WTC11 (cell line): ENCODE measurements at regions of chr9 and their contacts with region 1.

Region 1: DNA sequence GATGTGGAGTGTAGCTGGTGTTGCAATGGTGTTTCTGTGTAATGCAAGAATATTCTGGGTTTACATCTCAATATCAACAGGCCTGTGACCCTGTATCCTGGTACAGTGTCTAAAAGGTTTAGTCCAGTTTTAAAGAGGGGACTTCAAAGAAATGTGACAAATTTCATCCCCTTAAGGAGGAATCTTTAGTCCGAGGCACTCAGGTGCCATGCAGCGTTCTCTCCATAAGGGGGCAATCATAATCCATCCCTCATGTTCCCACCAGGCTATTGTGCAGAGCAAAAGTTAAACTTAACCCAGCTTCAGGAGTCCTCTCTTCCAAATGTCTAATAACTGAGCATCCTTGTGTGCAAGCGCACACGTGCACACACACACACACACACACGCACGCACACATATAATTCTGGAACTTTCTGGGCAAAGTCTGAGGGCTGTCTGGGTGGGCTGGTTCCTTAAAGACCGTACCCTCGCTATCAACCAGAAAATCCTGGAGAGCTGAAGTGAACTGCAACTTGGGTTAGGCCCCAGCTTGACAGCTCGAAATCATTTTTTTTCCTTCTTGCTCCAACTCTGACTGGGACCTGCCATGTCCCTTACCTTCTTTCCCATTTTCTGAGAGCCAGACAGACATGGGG is 46.0 kb downstream of the CRB2 start:
- DNase-seq: peak; percentile 66
- ATAC-seq: peak; percentile 77
- H3K4me3 Mint-ChIP-seq: no peak overlapping the region
- H3K27ac Mint-ChIP-seq: peak overlapping the region; percentile 30; the same call in 1 of the 2 replicates
- H3K4me1 Mint-ChIP-seq: peaks cover 9% of the 10 kb centered on the region
- H3K27me3 Mint-ChIP-seq: no peaks in the 10 kb centered on the region
- CTCF ChIP-seq: peak; percentile 56

Region 2: DNA sequence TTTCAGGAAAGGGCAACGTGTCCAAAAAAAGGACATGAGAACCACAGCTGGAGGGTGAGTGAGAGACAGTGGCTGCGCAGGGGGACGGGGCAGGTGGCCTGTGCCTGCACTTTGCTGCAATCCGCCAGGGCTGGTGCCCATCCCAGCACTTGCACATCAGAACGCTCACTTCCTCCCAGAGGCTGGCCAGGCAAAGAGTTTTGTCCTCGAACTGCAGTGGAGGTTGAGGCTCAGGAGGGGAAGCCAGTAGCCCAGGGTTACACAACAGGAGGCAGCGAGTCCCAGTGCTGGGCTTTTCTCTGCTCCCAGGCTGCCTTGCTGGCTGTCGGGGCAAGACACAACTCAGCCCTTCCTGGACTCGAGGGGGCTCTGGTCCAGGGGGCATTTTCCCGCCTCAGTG is 12.9 kb before region 1 on chr9:
- CTCF ChIA-PET with region 1: interaction called, 12 read pairs
- POLR2A ChIA-PET with region 1: no interaction called
- DNase-seq: no peak
- ATAC-seq: no peak
- H3K4me3 Mint-ChIP-seq: no peak overlapping the region
- H3K27ac Mint-ChIP-seq: no peak overlapping the region
- H3K4me1 Mint-ChIP-seq: no peaks in the 10 kb centered on the region
- H3K27me3 Mint-ChIP-seq: no peaks in the 10 kb centered on the region; the same call in 1 of the 2 replicates
- CTCF ChIP-seq: no peak

Region 3: DNA sequence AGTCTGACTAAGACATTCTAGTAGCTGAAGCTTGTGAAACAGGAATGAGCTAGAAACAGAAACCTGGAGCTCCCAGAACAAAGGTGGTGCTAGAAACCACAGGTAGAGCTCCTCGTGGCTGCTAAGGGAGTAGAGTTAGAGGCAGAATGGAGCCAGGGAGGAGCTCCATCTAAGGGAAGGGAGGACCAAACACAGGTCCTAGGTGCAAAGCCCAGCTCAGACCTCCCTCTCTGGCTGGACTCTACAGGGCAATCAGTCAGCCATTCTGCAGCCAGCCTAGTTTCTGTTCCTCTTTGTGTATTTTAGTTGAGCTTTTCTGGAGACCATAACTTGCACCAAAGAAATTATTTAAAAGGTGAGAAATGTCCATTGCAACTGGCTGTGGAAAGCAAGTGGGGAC is 24.4 kb after region 1 on chr9:
- CTCF ChIA-PET with region 1: interaction called, 14 read pairs
- POLR2A ChIA-PET with region 1: no interaction called
- DNase-seq: no peak
- ATAC-seq: peak; percentile 14; the same call in 1 of the 2 replicates
- H3K4me3 Mint-ChIP-seq: no peak overlapping the region
- H3K27ac Mint-ChIP-seq: no peak overlapping the region
- H3K4me1 Mint-ChIP-seq: peaks cover 25% of the 10 kb centered on the region
- H3K27me3 Mint-ChIP-seq: no peaks in the 10 kb centered on the region; the same call in 1 of the 2 replicates
- CTCF ChIP-seq: no peak

Region 4: GRCh38 chr9:123447934-123448646 is 46.1 kb after region 1 on chr9:
- CTCF ChIA-PET with region 1: interaction called, 11 read pairs
- POLR2A ChIA-PET with region 1: no interaction called
- DNase-seq: no peak
- ATAC-seq: peak; percentile 71
- H3K4me3 Mint-ChIP-seq: no peak overlapping the region
- H3K27ac Mint-ChIP-seq: no peak overlapping the region
- H3K4me1 Mint-ChIP-seq: peaks cover 11% of the 10 kb centered on the region
- H3K27me3 Mint-ChIP-seq: no peaks in the 10 kb centered on the region
- CTCF ChIP-seq: no peak

Region 5: GRCh38 chr9:123544007-123544827 is 142.2 kb after region 1 on chr9:
- CTCF ChIA-PET with region 1: interaction called, 17 read pairs
- POLR2A ChIA-PET with region 1: no interaction called
- DNase-seq: no peak
- ATAC-seq: peak; percentile 34; the same call in 1 of the 2 replicates
- H3K4me3 Mint-ChIP-seq: no peak overlapping the region
- H3K27ac Mint-ChIP-seq: no peak overlapping the region
- H3K4me1 Mint-ChIP-seq: peaks cover 6% of the 10 kb centered on the region
- H3K27me3 Mint-ChIP-seq: no peaks in the 10 kb centered on the region
- CTCF ChIP-seq: peak; percentile 50

Region 6: DNA sequence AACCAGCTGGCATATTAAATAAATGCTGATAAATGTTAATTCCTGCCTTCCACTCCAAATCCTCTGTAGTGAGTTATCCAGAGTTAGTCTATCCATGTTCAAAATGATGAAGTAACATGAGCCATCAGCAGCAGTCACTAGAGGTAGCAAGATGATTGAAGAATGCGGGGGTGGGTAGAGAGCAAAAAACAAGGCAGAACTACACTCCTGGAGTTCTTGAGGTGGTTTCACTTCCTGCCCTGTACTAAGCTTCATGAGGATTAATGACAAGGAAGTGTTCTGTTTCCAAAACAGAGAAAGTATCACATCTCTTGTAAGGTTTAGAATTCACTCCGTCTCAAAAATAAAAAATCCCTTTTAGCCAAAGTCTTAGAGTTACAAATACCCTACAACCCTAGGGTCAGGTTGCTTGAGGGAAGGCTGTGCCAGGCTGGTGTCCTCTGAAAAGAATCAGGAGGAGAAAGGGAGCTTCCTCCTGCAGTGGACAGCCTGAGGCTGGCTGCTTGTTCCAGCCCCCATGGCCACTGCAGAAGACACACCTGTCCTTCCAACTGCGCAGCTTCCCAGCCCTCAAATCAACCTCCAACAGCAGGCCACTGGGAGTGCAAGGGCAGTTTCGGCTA is 347.7 kb after region 1 on chr9:
- CTCF ChIA-PET with region 1: no interaction called
- POLR2A ChIA-PET with region 1: no interaction called
- DNase-seq: no peak
- ATAC-seq: peak; percentile 69
- H3K4me3 Mint-ChIP-seq: no peak overlapping the region
- H3K27ac Mint-ChIP-seq: no peak overlapping the region
- H3K4me1 Mint-ChIP-seq: peaks cover 38% of the 10 kb centered on the region
- H3K27me3 Mint-ChIP-seq: no peaks in the 10 kb centered on the region
- CTCF ChIP-seq: no peak